GM10248 (cell line): ENCODE measurements at regions of chr6 and their contacts with region 1.

Region 1: GRCh38 chr6:91632308-91632707 is 1045.4 kb upstream of the MAP3K7 start:
- DNase-seq: no peak
- CTCF ChIP-seq: no peak

Region 2: GRCh38 chr6:91613481-91613880 is 18.8 kb before region 1 on chr6:
- CTCF ChIA-PET with region 1: interaction called, 14 read pairs
- POLR2A ChIA-PET with region 1: no interaction called
- DNase-seq: no peak
- CTCF ChIP-seq: no peak

Region 3: DNA sequence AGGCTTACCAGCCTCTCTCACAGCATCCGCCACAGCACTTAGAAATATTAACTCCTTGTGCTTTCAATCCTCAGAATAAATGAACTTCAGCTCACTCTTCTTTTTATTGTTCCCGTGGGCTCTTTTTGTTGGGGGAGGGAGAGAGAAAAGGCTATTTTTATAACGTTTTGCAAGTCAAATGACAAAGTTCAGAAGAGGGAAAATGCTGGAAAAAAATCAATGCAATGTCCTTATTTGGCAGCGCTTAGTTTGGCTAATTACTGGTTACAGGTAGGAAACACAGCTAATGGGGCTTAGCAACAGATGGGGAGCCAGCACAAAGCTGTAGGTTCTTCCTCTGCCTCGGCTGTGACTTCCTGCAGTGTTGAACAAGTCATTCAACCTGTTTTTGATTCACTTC is 21.6 kb after region 1 on chr6:
- CTCF ChIA-PET with region 1: no interaction called
- POLR2A ChIA-PET with region 1: no interaction called
- DNase-seq: no peak
- CTCF ChIP-seq: no peak